ENCODE measurements at regions of chr18 and their contacts with region 1.

Region 1: GRCh38 chr18:32289483-32290075 is 99.7 kb downstream of the MEP1B start:
- DNase-seq: peak; percentile 48
- ATAC-seq: peak; percentile 55
- H3K4me3 Mint-ChIP-seq: no peak overlapping the region
- H3K27ac Mint-ChIP-seq: no peak overlapping the region
- H3K4me1 Mint-ChIP-seq: no peaks in the 10 kb centered on the region
- H3K27me3 Mint-ChIP-seq: peaks cover 3% of the 10 kb centered on the region

Region 2: DNA sequence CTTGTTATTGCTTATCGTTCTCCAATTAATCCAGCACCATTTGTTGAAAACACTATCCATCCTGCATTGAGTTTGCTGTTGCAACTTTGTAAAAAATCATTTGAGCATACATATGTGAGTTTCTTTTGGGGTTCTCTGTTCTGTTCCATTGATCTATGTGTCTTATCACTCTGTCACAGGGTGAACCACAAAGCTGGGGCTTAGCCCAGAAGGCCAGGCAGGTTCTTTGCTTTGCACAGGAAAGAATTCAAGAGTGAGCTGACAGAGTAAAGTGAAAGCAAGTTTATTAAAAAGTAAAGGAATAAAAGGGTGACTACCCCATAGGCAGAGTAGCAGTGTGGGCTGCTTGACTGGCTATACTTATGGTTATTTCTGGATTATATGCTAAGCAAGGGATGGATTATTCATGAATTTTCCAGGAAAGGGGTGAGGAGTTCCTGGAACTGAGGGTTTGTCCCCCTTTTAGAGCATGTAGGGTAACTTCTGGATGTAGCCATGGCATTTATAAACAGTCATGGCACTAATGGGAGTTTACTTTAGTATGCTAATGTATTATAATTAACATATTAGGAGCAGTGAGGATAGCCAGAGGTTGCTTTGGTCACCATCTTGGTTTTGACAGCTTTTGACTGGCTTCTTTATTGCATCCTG is 151.1 kb before region 1 on chr18:
- CTCF ChIA-PET with region 1: no interaction called
- POLR2A ChIA-PET with region 1: no interaction called
- DNase-seq: peak; percentile 39
- ATAC-seq: peak; percentile 78
- H3K4me3 Mint-ChIP-seq: no peak overlapping the region
- H3K27ac Mint-ChIP-seq: peak overlapping the region; percentile 11
- H3K4me1 Mint-ChIP-seq: peaks cover 6% of the 10 kb centered on the region
- H3K27me3 Mint-ChIP-seq: no peaks in the 10 kb centered on the region

Region 3: DNA sequence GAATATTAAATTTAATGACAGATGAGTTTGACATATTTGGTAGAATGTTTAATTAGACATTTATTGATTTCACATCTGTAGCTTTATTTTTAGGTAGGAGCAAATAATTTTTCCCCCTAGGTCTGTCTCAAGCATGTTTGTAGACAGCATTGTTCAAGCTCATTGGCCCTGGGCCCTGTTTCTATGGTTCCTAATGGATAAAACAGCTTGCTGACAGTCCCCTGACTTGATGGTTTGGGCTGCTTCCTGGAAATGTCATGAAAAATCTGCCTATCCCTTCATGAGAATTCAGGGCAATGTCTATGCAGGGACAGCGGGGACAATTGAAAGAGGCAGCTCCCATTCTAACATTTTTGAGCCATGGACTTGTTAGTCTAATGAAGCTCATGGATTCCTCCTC is 114.3 kb before region 1 on chr18:
- CTCF ChIA-PET with region 1: no interaction called
- POLR2A ChIA-PET with region 1: no interaction called
- DNase-seq: no peak
- ATAC-seq: no peak
- H3K4me3 Mint-ChIP-seq: no peak overlapping the region
- H3K27ac Mint-ChIP-seq: no peak overlapping the region
- H3K4me1 Mint-ChIP-seq: no peaks in the 10 kb centered on the region
- H3K27me3 Mint-ChIP-seq: peaks cover 3% of the 10 kb centered on the region

Region 4: GRCh38 chr18:32271672-32272208 is 17.8 kb before region 1 on chr18:
- CTCF ChIA-PET with region 1: interaction called, 10 read pairs
- POLR2A ChIA-PET with region 1: no interaction called
- DNase-seq: peak; percentile 24
- ATAC-seq: no peak
- H3K4me3 Mint-ChIP-seq: no peak overlapping the region
- H3K27ac Mint-ChIP-seq: no peak overlapping the region
- H3K4me1 Mint-ChIP-seq: no peaks in the 10 kb centered on the region
- H3K27me3 Mint-ChIP-seq: peaks cover 8% of the 10 kb centered on the region

Region 5: GRCh38 chr18:32324181-32324580 is 34.6 kb after region 1 on chr18:
- CTCF ChIA-PET with region 1: no interaction called
- POLR2A ChIA-PET with region 1: no interaction called
- DNase-seq: no peak
- ATAC-seq: no peak
- H3K4me3 Mint-ChIP-seq: no peak overlapping the region
- H3K27ac Mint-ChIP-seq: no peak overlapping the region
- H3K4me1 Mint-ChIP-seq: no peaks in the 10 kb centered on the region
- H3K27me3 Mint-ChIP-seq: peaks cover 14% of the 10 kb centered on the region